ENCODE measurements at regions of chr22 and their contacts with region 1.

Region 1: GRCh38 chr22:30754971-30755756 is 60.5 kb downstream of the OSBP2 start:
- DNase-seq: peak; percentile 70
- H3K27ac ChIP-seq: no peak overlapping the region
- CTCF ChIP-seq: peak; percentile 60

Region 2: DNA sequence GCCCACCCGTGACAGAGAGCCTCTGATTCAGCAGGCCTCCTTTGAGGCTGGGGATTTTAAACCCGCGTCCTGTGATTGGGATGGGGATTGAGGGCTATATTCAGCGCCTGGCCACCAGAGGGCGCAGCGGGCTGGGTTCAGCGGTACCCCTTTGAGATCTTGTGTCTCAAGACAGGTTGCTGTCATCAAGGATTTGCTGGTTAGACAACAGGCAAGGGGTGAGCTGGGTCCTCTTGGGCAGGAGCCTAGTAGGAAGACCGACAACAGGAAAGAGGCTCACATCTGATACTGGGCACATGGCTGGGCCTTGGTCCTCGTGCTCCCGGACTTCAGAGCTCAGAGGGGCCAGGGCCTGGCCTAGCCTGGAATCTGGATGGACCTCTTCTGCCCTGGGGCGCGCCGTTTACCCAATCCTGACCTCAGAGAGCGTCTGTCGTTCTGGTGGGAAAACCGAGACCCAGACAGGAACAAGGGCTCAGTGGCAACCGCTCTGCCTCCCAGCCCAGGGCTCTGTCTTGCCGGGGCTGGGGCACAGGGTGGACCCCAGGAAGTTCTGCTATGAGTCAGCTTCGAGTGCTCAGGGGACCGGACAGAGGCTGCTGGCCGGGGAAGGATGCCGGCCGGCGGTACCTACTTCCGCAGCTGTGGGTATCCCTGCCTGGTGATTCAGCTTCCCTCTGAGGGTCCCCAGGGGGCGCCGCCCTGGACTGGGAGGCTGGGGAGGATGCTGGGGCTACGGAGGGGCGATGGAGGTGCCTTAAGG is 120.5 kb before region 1 on chr22:
- CTCF ChIA-PET with region 1: interaction called, 33 read pairs
- POLR2A ChIA-PET with region 1: no interaction called
- DNase-seq: peak; percentile 85
- H3K27ac ChIP-seq: peak overlapping the region; percentile 85
- CTCF ChIP-seq: peak; percentile 88

Region 3: GRCh38 chr22:30777587-30777986 is 22.4 kb after region 1 on chr22:
- CTCF ChIA-PET with region 1: no interaction called
- POLR2A ChIA-PET with region 1: no interaction called
- DNase-seq: no peak
- H3K27ac ChIP-seq: no peak overlapping the region
- CTCF ChIP-seq: no peak

Region 4: DNA sequence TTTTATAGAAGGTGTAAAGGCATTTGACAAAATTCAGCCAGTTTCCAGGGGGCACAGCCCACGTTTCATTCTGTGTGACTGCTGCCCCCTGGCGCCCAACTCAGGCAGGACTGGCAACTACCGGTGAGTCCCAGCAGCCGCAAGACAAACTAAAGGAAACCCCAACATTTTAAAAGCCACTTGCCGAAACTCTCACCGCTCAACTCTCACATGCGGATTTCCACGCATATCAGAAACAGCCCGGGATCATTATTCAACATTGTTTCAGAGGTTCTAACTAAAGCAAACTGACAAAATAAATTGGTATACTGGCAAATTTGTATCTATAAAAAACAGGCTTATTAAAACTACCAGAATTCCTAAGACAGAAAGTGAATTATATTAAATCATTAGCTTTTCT is 165.2 kb after region 1 on chr22:
- CTCF ChIA-PET with region 1: interaction called, 10 read pairs
- POLR2A ChIA-PET with region 1: no interaction called
- DNase-seq: peak; percentile 68
- H3K27ac ChIP-seq: no peak overlapping the region
- CTCF ChIP-seq: peak; percentile 91

Measured in RWPE1 (cell line).